Lower leg skin (tissue), 4 donors: ENCODE measurements at regions of chr12 and their contacts with region 1.

Region 1: DNA sequence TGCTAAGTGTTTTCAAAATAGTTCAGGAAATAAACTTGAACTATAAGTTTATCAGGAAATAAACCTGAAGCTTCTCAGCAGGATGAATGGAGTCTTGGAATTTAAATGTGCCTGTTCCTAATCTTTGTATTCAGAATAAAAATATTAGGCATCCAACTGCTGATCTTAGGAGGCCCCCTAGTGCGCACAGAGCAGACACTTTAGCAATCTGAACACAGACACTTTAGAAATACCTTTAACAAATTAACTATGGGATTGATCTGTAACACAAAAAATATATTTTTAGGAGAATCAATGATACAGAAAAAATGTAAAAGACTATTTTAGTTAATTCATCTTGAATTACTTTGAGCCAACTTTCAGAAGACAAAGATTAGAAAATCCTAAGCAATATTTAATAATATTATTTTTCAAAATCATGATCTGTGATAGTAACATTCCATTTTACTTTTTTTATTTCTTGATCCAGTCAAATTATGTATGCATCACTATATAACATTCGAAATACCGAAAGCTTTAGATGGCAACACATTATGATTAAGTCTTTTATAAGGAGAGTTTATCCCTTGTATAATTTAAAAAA is 80.9 kb downstream of the SLC41A2 start:
- DNase-seq: peak in 1 of 2 donors; percentile 23
- H3K4me3 ChIP-seq: no peak overlapping the region
- CTCF ChIP-seq: no peak
- POLR2A ChIP-seq: no peak

Region 2: GRCh38 chr12:104387190-104387589 is 490.0 kb before region 1 on chr12:
- intact Hi-C with region 1: loop called (anchors 5 kb)
- DNase-seq: peak in 1 of 2 donors; percentile 57
- H3K4me3 ChIP-seq: no peak overlapping the region
- CTCF ChIP-seq: no peak
- POLR2A ChIP-seq: no peak

Region 3: GRCh38 chr12:104858611-104859543 is 18.3 kb before region 1 on chr12:
- intact Hi-C with region 1: no loop called
- DNase-seq: no peak
- H3K4me3 ChIP-seq: no peak overlapping the region
- CTCF ChIP-seq: no peak
- POLR2A ChIP-seq: no peak